Right cardiac atrium (tissue), 5 donors: ENCODE measurements at regions of chr3 and their contacts with region 1.

Region 1: DNA sequence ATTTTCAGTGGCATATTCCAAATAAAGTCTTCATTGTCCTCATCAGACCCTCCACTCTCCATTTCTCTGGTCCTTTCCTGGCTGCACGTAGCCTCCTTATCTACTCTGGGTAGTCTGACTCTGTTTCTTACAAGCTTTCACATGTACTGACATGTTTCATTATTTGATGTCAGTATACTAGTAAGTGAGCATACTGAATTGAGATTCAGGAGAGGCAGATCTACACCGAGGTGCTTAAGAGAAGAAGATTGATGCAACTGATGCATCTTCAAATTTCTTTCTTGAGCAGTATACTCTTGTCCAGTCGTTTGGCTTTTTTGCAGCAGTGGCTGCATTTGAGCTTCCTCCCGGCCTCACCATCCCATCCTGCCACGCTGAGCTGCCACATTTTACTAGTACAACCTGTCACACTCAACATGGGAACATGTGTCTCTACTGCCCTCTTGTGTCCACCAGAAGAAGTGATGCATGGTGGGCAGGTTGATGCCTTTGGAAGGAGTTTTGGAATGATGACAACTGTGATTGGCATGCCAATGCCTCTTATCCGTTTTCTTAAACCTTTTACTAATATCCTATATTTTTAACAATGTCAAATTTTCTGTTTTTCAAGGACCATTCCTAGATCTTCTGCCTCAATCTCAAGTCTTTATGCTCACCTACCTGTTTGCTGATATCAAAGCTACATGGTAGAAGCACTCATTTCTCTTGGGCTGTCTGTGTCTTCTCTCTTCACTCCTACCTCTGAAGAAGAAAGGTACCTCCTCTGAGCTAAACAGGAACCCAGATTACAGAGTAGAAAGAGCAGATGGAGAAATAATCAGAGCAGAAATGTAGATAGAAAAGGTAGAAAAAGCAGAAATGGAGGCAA is 38.7 kb downstream of the GUCA1C start:
- DNase-seq: peak in 2 of 3 donors; percentile 14 to 59
- ATAC-seq: peak; percentile 45 to 74
- H3K4me3 ChIP-seq: no peak overlapping the region
- H3K27ac ChIP-seq: no peak overlapping the region
- H3K4me1 ChIP-seq: no peaks in the 10 kb centered on the region
- H3K27me3 ChIP-seq: no peaks in the 10 kb centered on the region

Region 2: DNA sequence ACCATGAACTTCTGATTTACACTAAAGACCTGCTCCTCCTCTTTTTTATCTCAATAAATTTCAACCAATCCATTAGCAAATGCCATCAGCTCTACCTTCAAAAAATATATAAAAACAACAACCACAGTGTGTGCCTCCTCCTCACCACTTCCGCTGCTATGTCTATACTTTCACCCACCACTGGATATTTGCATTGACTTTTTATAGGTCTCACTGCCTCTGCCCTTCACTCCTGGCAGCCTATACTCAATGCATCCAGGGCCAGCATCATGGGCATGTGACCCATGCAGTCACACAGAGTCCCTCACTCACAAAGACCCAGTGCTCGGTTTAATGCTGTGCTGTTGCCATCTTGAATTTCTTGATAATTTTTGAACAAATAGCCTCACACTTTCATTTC is 1591.3 kb before region 1 on chr3:
- intact Hi-C with region 1: no loop called
- DNase-seq: no peak
- ATAC-seq: no peak
- H3K4me3 ChIP-seq: no peak overlapping the region
- H3K27ac ChIP-seq: no peak overlapping the region
- H3K4me1 ChIP-seq: no peaks in the 10 kb centered on the region
- H3K27me3 ChIP-seq: no peaks in the 10 kb centered on the region

Region 3: DNA sequence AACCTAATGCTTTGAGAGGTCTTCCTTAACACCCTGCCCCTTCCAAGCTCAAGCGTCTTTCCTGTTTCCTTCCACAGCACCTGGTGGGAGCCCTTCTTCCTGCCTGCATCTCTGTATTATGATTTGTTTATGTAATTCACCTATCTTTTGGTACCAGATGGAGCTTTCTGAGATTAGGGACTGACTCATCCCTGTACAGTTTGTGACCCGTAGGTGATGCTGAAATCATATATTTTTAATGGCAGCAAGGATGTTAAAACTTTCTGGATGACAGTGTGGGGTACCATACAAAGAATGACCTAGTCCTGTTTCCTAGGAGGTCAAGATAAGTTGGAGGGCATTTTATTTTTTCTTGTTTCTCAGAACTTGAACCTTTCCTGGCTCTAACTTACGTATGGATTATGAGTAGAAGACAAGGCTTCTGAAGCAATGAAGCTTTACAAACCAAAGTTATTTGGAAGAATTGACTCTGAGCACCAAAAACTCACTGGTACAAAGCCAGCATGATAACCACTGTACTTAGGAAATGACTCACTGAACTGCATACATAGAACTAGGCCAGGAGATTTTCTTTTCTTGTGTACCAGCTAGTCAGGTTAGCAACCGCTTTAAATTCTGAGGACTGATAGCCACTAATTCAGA is 572.0 kb before region 1 on chr3:
- intact Hi-C with region 1: no loop called
- DNase-seq: no peak
- ATAC-seq: peak in 1 of 2 donors; percentile 32
- H3K4me3 ChIP-seq: no peak overlapping the region
- H3K27ac ChIP-seq: no peak overlapping the region
- H3K4me1 ChIP-seq: no peaks in the 10 kb centered on the region
- H3K27me3 ChIP-seq: no peaks in the 10 kb centered on the region

Region 4: GRCh38 chr3:108662130-108662738 is 252.8 kb before region 1 on chr3:
- intact Hi-C with region 1: loop called in 1 of 4 experiments (anchors 10 kb)
- DNase-seq: no peak
- ATAC-seq: peak; percentile 67 to 68
- H3K4me3 ChIP-seq: no peak overlapping the region
- H3K27ac ChIP-seq: no peak overlapping the region
- H3K4me1 ChIP-seq: no peaks in the 10 kb centered on the region
- H3K27me3 ChIP-seq: no peaks in the 10 kb centered on the region

Region 5: DNA sequence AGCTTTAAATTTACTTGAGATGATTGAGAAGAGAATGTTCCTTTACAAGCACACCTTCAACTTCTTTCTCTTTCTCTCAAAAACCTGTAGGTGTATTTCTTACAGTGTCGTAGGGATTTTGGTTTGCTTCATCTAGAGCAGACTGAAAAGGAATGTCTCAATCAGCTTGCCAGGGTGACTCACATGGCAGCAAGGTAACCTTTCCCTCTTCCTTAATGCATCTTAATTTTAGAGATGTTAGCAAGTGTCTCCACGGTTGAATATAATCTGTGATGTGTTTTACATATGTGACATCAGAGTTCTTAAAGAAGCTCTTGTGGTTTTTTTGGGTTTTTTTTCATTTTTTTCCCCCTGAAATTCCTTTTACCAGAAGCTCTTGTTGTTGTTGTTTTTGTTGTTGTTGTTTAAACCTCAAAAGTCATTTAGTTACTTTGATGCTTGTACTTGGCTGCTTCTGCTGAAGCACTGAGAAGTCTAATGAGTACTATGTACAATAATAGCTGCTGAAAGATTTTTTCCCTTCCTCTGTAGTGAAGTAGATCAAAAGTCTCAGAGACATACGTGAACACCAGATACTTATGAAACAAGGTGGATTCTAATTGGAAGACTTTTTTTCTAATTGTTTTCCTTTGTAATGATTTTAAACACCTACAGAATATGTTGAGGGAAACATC is 240.9 kb before region 1 on chr3:
- intact Hi-C with region 1: loop called in 2 of 4 experiments (anchors 10 kb)
- DNase-seq: no peak
- ATAC-seq: no peak
- H3K4me3 ChIP-seq: no peak overlapping the region
- H3K27ac ChIP-seq: no peak overlapping the region
- H3K4me1 ChIP-seq: no peaks in the 10 kb centered on the region
- H3K27me3 ChIP-seq: no peaks in the 10 kb centered on the region

Region 6: DNA sequence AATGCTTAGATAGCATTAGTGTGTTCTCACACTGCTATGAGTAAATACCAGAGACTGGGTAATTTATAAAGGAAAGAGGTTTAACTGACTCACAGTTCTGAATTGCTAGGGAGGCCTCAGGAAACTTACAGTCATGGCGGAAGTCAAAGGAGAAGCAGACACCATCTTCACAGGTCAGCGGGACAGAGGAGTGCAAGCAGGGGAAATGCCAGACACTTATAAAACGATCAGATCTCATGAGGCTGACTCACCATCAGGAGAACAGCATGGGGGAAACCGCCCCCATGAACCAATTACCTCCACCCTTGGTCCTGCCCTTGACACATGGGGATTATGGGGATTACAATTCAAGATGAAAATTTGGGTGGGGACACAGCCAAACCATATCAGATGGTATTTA is 803.8 kb after region 1 on chr3:
- intact Hi-C with region 1: no loop called
- DNase-seq: no peak
- ATAC-seq: no peak
- H3K4me3 ChIP-seq: no peak overlapping the region
- H3K27ac ChIP-seq: no peak overlapping the region
- H3K4me1 ChIP-seq: peaks cover 1% of the 10 kb centered on the region
- H3K27me3 ChIP-seq: no peaks in the 10 kb centered on the region